Transverse colon (tissue), 4 donors: ENCODE measurements at regions of chr11 and their contacts with region 1.

Region 1: DNA sequence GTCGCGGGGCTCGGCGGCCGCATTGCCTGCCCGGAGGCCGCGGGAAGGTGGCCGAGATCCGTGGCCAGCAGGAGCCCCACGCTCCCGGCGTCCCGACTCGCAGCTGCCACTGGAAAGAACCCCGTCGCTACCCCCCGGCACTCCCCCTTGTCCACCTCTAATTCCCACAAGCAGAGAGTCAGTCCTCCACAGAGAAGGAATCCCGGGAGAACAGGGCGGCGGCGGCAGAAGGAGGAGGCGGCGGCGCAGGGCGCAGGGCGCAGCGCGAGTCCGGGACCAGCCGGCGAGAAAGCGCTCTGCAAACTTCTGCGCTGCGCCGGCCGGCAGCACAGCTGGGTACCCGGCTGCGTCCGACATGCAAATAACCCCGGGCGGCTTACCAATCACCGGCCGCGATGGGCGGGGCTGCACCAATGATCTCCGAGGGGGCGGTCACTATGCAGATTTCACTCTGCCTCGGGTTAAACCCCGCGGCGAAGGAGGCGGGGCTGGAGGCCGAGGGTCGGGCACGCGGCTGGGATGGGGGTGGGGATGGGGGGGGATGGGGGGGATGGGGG is at the start of gene ABTB2:
- DNase-seq: peak; percentile 99
- H3K4me3 ChIP-seq: peak within 1 kb of the TSS; percentile 41 to 62 (median 47)
- H3K27ac ChIP-seq: peak within 1 kb of the TSS; percentile 76 to 91 (median 84)
- H3K4me1 ChIP-seq: peaks cover 13 to 26% (median 22%) of the 10 kb centered on the region in 4 donors
- H3K27me3 ChIP-seq: peaks cover 15% of the 10 kb centered on the region
- CTCF ChIP-seq: no peak
- EP300 ChIP-seq: no peak
- POLR2A ChIP-seq: peak; percentile 96
- total RNA-seq, gene ABTB2: 0.60 to 41.9 (median 20.7) TPM

Region 2: DNA sequence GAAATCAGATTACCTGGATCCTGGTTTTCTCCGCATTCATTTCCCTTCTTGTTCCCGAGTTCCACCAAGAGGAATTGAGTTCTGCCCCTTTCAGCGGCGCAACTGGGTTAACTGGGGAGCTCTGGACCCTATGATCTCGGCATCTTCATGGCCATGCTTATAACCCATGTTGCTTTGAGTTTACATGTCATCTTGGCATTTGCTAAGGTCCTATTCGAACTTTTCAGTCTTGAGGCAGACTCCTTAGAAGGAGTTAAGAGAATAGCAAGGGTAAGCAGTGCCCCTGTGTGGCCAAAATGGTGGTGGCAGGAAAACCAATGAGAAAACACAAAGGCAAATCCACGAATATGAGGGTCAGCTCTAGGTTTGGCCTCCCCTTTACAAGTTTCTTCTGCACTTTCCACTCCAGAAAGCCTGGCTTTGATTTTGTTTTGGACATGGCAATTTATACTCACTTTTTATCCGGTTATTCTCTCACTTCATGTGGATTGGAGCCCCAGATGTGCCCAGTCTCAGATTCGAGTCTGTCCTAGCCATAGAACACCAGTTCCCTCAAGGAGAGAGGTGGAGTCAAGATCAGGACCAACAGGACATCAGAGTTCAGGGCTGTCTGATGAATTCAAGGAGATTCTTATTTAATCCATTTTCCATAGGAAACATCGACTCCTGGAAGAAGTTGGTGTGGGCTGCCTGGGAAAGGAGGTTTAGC is 528.2 kb before region 1 on chr11:
- in situ Hi-C with region 1: loop called in 1 of 4 experiments (anchors 25 kb)
- intact Hi-C with region 1: no loop called
- DNase-seq: peak; percentile 55
- H3K4me3 ChIP-seq: peak overlapping the region in 3 of 4 donors; percentile 15 to 47 (median 32)
- H3K27ac ChIP-seq: no peak overlapping the region
- H3K4me1 ChIP-seq: peaks cover 7 to 10% (median 8%) of the 10 kb centered on the region in 4 donors
- H3K27me3 ChIP-seq: peaks cover 69% of the 10 kb centered on the region
- CTCF ChIP-seq: peak; percentile 68 to 73 (median 69)
- EP300 ChIP-seq: no peak
- POLR2A ChIP-seq: no peak

Region 3: GRCh38 chr11:34174412-34175041 is 183.3 kb before region 1 on chr11:
- in situ Hi-C with region 1: loop called (anchors 5 to 10 kb)
- intact Hi-C with region 1: loop called (anchors 2 kb)
- DNase-seq: peak; percentile 86
- H3K4me3 ChIP-seq: peak overlapping the region in 2 of 4 donors; percentile 21 to 40
- H3K27ac ChIP-seq: no peak overlapping the region
- H3K4me1 ChIP-seq: peaks cover 0 to 12% (median 6%) of the 10 kb centered on the region in 4 donors
- H3K27me3 ChIP-seq: no peaks in the 10 kb centered on the region
- CTCF ChIP-seq: peak; percentile 94 to 97 (median 96)
- EP300 ChIP-seq: no peak
- POLR2A ChIP-seq: no peak